Esophagus squamous epithelium (tissue), 5 donors: ENCODE measurements at regions of chr10 and their contacts with region 1.

Region 1: DNA sequence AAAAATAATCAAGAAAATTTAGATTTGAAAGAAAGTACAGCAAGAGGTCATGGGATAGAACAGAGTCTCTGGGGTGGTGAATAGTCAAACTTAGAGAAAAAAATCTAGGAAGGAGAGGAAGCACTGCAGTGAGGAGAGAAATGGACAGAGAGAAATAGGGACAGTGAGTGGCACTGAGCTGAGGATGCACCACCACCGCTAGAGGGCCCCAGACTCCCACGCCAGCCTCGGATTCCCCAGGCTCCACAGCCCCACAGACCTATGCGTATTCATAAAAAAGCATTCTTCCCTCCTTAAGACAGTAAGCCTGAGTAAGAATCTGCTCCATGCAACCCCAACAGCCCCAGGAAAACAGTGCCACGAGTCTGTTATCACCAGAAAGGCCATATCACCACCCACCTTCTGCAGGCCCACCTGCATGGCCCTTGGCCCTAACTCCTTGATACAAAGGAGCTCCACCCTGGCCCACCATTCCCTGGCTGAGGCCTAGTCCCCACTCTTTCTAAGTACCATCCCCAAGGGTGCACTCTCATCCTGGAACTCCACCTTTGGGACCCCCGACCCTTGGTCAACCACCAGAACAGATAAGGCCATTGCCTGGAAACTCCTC is 91.0 kb downstream of the ALOX5 start:
- DNase-seq: no peak
- H3K4me3 ChIP-seq: no peak overlapping the region
- H3K27ac ChIP-seq: no peak overlapping the region
- H3K4me1 ChIP-seq: peaks cover under 1 to 33% (median 3%) of the 10 kb centered on the region in 3 donors
- H3K27me3 ChIP-seq: no peaks in the 10 kb centered on the region
- CTCF ChIP-seq: peak; percentile 68 to 89 (median 82)
- POLR2A ChIP-seq: no peak

Region 2: DNA sequence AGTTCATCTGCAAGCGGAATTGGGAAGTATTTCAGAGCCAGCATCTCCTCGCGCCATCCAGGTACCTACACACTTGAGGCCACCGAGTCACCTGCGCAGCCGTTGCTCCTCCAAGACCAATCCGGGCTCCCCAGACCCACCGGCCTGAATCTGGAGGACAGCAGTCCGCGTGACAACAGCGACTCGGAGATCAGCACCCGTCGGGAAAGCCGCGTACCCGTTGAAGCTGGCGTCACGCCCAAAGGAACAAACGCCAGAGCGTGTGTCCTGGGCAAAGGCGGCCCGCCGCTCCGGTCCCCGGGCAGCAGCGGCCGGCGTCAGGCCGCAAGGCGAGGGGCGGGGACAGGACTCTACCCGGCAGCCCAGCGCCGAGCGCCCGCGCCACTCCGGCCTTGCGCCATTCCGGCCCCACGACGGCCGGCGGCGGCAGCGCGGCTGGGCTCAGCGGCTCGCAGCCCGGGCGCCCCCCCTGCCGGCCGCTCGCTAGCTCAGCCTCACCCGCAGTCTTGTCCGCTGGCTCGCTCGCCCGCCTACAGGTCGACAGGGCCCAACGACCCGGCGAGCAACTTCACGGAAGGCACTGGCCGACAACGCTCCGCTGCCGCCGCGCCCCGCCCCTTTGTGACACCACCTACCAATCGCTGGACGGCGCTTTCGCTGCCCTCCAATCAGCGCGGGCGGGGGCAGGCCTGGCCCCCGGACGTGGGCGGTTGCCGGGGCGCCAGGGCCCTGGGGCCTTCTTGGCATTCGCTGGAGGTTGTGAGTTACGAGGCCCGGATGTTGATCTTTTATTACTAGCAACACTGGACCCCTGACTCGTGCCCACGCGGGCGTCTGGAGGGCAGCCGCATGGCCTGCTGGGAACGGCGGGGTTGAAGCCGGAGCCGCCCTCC is 207.4 kb after region 1 on chr10 and contains the start of gene ZFAND4:
- intact Hi-C with region 1: loop called (anchors 5 kb)
- DNase-seq: peak; percentile 85
- H3K4me3 ChIP-seq: peak within 1 kb of the TSS; percentile 59 to 86 (median 65)
- H3K27ac ChIP-seq: peak within 1 kb of the TSS; percentile 78 to 95 (median 89)
- H3K4me1 ChIP-seq: peaks cover 0 to 20% (median 0%) of the 10 kb centered on the region in 3 donors
- H3K27me3 ChIP-seq: no peaks in the 10 kb centered on the region
- CTCF ChIP-seq: peak; percentile 10 to 80 (median 71)
- POLR2A ChIP-seq: peak in 3 of 4 donors; percentile 61 to 70 (median 64)
- total RNA-seq, gene ZFAND4: 5.0 to 15.3 (median 7.9) TPM